ENCODE measurements at regions of chr9 and their contacts with region 1.

Region 1: GRCh38 chr9:106305428-106306133 is 557.4 kb upstream of the ZNF462 start:
- DNase-seq: no peak
- ATAC-seq: peak; percentile 42
- H3K4me3 ChIP-seq: no peak overlapping the region
- H3K27ac ChIP-seq: no peak overlapping the region
- H3K4me1 ChIP-seq: no peaks in the 10 kb centered on the region
- H3K27me3 ChIP-seq: no peaks in the 10 kb centered on the region
- CTCF ChIP-seq: no peak
- EP300 ChIP-seq: peak in 1 of 2 experiments; percentile 46; a peak in 1 of 4 replicates
- POLR2A ChIP-seq: no peak
- RAD21 ChIP-seq: no peak

Region 2: GRCh38 chr9:106286249-106286648 is 19.3 kb before region 1 on chr9:
- CTCF ChIA-PET with region 1: interaction called, 10 read pairs
- POLR2A ChIA-PET with region 1: no interaction called
- RAD21 ChIA-PET with region 1: interaction called, 7 read pairs
- SMC1A ChIA-PET with region 1: interaction called, 9 read pairs
- in situ Hi-C with region 1: no loop called
- intact Hi-C with region 1: no loop called
- DNase-seq: no peak
- ATAC-seq: peak; percentile 87
- H3K4me3 ChIP-seq: no peak overlapping the region
- H3K27ac ChIP-seq: no peak overlapping the region
- H3K4me1 ChIP-seq: no peaks in the 10 kb centered on the region
- H3K27me3 ChIP-seq: no peaks in the 10 kb centered on the region
- CTCF ChIP-seq: peak in 2 of 3 experiments; percentile 41 to 45; a peak in 4 of 6 replicates
- EP300 ChIP-seq: no peak
- POLR2A ChIP-seq: no peak
- RAD21 ChIP-seq: no peak

Region 3: GRCh38 chr9:106324591-106325280 is 19.2 kb after region 1 on chr9:
- CTCF ChIA-PET with region 1: interaction called, 6 read pairs
- POLR2A ChIA-PET with region 1: interaction called, 4 read pairs
- RAD21 ChIA-PET with region 1: interaction called, 47 read pairs
- SMC1A ChIA-PET with region 1: interaction called, 50 read pairs
- in situ Hi-C with region 1: no loop called
- intact Hi-C with region 1: no loop called
- DNase-seq: no peak
- ATAC-seq: peak; percentile 4; the same call in 1 of the 3 replicates
- H3K4me3 ChIP-seq: no peak overlapping the region
- H3K27ac ChIP-seq: no peak overlapping the region
- H3K4me1 ChIP-seq: no peaks in the 10 kb centered on the region
- H3K27me3 ChIP-seq: no peaks in the 10 kb centered on the region
- CTCF ChIP-seq: no peak
- EP300 ChIP-seq: no peak
- POLR2A ChIP-seq: no peak
- RAD21 ChIP-seq: no peak

Region 4: DNA sequence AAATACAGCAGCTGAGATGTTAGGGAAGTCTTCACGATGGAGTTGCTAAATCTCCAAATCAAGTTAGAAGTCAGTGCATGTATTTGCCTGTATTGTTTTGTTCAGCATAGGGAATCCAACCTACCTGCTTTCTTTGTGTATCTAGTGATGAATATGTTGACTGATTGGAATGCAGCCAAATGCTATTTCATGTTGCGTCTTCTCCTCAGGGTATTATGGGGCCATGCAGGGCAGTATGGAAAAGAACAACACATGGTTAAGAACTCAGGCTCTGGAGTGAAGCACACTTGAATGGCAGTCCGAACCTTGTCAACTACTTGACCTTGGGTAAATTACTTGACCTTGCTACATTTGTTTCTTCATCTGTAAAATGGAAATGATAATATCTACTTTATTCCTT is 27.9 kb after region 1 on chr9:
- CTCF ChIA-PET with region 1: no interaction called
- POLR2A ChIA-PET with region 1: no interaction called
- RAD21 ChIA-PET with region 1: interaction called, 9 read pairs
- SMC1A ChIA-PET with region 1: interaction called, 50 read pairs
- in situ Hi-C with region 1: no loop called
- intact Hi-C with region 1: no loop called
- DNase-seq: no peak
- ATAC-seq: no peak; the same call in 2 of the 3 replicates
- H3K4me3 ChIP-seq: no peak overlapping the region
- H3K27ac ChIP-seq: no peak overlapping the region
- H3K4me1 ChIP-seq: no peaks in the 10 kb centered on the region
- H3K27me3 ChIP-seq: no peaks in the 10 kb centered on the region
- CTCF ChIP-seq: no peak
- EP300 ChIP-seq: no peak
- POLR2A ChIP-seq: no peak
- RAD21 ChIP-seq: no peak

Region 5: GRCh38 chr9:106648799-106649198 is 343.2 kb after region 1 on chr9:
- CTCF ChIA-PET with region 1: no interaction called
- POLR2A ChIA-PET with region 1: no interaction called
- RAD21 ChIA-PET with region 1: no interaction called
- SMC1A ChIA-PET with region 1: no interaction called
- in situ Hi-C with region 1: no loop called
- intact Hi-C with region 1: loop called (anchors 10 kb)
- DNase-seq: no peak
- ATAC-seq: no peak
- H3K4me3 ChIP-seq: no peak overlapping the region
- H3K27ac ChIP-seq: no peak overlapping the region
- H3K4me1 ChIP-seq: no peaks in the 10 kb centered on the region
- H3K27me3 ChIP-seq: no peaks in the 10 kb centered on the region
- CTCF ChIP-seq: peak in 1 of 3 experiments; percentile 16; a peak in 1 of 6 replicates
- EP300 ChIP-seq: no peak
- POLR2A ChIP-seq: no peak
- RAD21 ChIP-seq: no peak

Region 6: GRCh38 chr9:106878924-106879323 is 573.3 kb after region 1 on chr9:
- CTCF ChIA-PET with region 1: no interaction called
- POLR2A ChIA-PET with region 1: no interaction called
- RAD21 ChIA-PET with region 1: no interaction called
- SMC1A ChIA-PET with region 1: no interaction called
- in situ Hi-C with region 1: no loop called
- intact Hi-C with region 1: loop called (anchors 5 kb)
- DNase-seq: no peak
- ATAC-seq: peak; percentile 30
- H3K4me3 ChIP-seq: no peak overlapping the region
- H3K27ac ChIP-seq: no peak overlapping the region
- H3K4me1 ChIP-seq: no peaks in the 10 kb centered on the region
- H3K27me3 ChIP-seq: no peaks in the 10 kb centered on the region
- CTCF ChIP-seq: no peak
- EP300 ChIP-seq: no peak; a peak in 1 of 4 replicates
- POLR2A ChIP-seq: no peak
- RAD21 ChIP-seq: no peak

Measured in GM12878 (cell line).